PC-3 (cell line): ENCODE measurements at regions of chr6 and their contacts with region 1.

Region 1: DNA sequence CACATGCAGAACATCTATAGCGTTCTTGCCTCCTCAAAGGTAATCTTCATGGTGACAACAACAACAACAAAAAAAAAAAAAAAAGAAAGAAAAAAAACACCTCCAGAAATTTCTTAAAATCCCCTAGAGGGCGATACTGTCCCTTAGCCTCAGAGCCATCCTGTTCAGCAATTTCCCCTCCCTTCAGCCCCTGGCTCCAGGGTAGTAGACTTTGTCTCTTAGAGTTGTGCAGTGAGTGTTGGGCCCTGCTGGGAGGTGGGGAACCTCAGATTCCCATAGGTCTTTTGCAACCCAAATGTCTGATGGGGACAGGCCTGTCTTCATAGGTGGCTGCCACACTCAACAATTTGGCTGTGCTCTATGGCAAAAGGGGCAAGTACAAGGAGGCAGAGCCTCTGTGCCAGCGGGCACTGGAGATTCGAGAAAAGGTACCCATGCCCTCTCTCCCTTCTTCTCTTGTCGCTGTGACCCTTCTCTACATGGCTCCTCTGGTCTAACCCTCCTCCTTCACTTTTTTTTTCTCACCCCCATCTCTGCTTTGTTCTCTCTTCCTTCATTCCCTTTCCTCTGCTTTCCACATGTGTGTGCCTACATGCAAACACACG is 6.0 kb upstream of the PTK7 start:
- DNase-seq: peak; percentile 56
- ATAC-seq: peak; percentile 67
- H3K4me3 ChIP-seq: no peak overlapping the region
- H3K27ac ChIP-seq: no peak overlapping the region
- H3K4me1 ChIP-seq: no peaks in the 10 kb centered on the region
- H3K27me3 ChIP-seq: no peaks in the 10 kb centered on the region
- CTCF ChIP-seq: peak; percentile 76

Region 2: DNA sequence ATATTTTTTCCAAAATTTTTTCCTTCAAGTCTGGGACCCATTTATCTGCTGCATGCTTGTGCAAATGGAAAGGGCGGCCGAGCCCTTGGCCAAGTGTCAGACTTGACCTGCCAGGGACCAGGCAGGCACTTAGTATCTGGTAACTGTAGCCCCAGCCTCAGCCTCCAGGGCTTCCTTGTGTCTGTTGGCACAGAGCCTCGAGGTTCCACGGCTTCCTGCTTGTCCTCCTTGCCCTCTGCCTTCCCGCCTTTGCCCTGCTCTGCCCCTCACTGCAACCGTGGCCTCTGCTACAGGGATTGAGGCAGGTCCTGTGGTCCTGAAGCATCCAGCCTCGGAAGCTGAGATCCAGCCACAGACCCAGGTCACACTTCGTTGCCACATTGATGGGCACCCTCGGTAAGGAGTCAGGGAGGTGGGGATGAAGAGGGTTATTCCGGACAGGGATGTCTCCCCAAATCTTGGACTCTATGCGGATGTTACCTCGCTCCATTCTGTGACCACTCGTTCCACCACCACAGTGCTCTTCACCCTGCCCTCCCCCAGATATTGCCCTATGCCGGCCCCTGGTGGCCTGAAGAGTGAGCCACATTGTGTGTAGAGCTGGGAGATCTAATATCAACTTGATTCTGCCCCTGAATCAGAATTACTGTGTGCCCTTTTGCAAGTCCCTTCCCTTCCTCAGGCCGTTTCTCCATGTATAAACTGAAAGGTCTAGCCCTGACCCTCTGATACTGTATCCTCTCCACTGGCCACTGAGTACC is 59.5 kb after region 1 on chr6:
- CTCF ChIA-PET with region 1: no interaction called
- POLR2A ChIA-PET with region 1: no interaction called
- intact Hi-C with region 1: loop called (anchors 1 kb)
- DNase-seq: peak; percentile 55
- ATAC-seq: peak; percentile 94
- H3K4me3 ChIP-seq: no peak overlapping the region
- H3K27ac ChIP-seq: no peak overlapping the region
- H3K4me1 ChIP-seq: peaks cover 7% of the 10 kb centered on the region; the same call in 1 of the 2 replicates
- H3K27me3 ChIP-seq: no peaks in the 10 kb centered on the region
- CTCF ChIP-seq: peak; percentile 75

Region 3: DNA sequence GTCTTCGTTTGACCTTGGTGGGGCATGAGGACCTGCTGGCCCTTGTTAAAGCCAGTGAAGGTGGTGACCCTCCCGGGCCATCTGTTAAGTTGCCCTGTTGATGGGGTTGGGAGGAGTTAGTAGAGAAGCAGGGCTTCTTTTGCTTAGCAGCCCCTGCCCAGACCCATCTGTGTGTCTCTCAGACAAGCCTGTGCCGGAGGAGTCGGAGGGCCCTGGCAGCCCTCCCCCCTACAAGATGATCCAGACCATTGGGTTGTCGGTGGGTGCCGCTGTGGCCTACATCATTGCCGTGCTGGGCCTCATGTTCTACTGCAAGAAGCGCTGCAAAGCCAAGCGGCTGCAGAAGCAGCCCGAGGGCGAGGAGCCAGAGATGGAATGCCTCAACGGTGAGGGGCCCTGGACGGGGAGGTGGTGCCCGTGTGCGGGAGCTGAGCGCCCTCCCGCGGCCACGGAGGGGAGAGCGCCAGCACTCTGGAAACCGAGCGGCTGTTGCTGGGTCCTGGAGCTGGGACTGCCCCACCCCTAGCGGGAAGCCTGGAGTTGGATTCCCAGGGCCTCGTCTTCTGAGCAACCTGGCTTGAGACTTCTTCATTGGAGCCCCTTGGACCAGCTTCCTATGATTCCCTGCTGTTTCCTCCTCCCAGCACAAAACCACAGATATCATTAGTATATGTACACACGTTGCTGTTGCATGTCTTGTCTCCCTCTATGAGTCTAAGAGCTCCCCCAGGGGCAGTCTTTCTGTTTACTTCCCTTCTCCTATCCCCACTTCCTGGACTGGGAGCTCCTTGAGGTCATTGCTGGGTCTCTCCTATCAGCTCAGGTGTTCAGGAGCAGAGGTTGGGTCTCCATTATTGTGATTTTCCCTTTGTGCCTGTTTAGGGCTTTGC is 73.3 kb after region 1 on chr6:
- CTCF ChIA-PET with region 1: no interaction called
- POLR2A ChIA-PET with region 1: no interaction called
- intact Hi-C with region 1: loop called (anchors 1 kb)
- DNase-seq: peak; percentile 91
- ATAC-seq: peak; percentile 96
- H3K4me3 ChIP-seq: no peak overlapping the region
- H3K27ac ChIP-seq: no peak overlapping the region
- H3K4me1 ChIP-seq: peaks cover 24% of the 10 kb centered on the region
- H3K27me3 ChIP-seq: no peaks in the 10 kb centered on the region
- CTCF ChIP-seq: peak; percentile 95